Heart left ventricle (tissue), 16 donors: ENCODE measurements at regions of chr17 and their contacts with region 1.

Region 1: GRCh38 chr17:45759761-45760160 is 24.4 kb upstream of the CRHR1 start:
- DNase-seq: no peak
- ATAC-seq: no peak
- H3K4me3 ChIP-seq: no peak overlapping the region
- H3K27ac ChIP-seq: no peak overlapping the region
- H3K4me1 ChIP-seq: no peaks in the 10 kb centered on the region
- H3K27me3 ChIP-seq: peaks cover 0 to 51% (median 6%) of the 10 kb centered on the region in 9 donors
- CTCF ChIP-seq: no peak
- POLR2A ChIP-seq: no peak

Region 2: DNA sequence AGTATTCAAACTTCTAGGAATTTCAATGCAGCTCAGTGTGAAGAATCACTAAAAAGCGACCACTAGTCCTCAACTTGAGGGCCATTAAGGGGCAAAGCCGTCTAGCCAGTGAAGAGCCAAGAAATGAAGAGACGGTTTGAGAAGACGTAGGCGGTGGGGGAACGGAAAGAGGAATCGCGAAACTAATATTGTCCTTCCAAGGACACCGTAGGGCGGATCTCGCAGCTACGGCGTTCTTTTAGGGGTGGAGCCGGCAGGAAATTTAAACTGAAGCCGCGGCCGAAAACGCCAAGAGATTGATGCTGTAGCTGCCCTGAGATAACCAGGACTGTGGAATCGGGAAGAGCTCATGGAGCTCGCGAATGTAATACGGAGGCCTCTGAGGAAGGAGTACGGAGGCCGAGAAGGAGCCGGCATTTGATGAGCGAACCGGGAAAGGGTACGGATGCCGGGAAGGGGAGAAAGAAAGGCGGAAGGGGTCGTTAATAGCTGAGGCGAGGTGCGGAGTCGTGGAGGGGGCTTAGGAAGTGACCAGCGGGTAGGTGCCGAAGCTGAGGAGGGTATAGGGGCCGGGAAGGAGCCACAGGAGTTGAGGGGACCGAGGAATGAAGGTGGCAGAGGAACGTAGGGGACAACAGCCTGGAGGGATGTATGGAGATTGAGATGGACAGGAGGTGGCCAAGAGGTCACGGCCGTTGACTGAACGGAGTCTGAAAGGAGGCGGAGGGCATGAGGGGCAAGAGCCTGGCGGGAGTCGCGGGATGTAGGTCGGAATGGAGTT is 1051.2 kb before region 1 on chr17 and contains the start of gene DBF4B:
- intact Hi-C with region 1: no loop called
- DNase-seq: peak; percentile 78 to 90 (median 81)
- ATAC-seq: peak; percentile 63 to 92 (median 88)
- H3K4me3 ChIP-seq: peak within 1 kb of the TSS; percentile 49 to 90 (median 75)
- H3K27ac ChIP-seq: peak within 1 kb of the TSS; percentile 30 to 88 (median 82)
- H3K4me1 ChIP-seq: peaks cover 0 to 21% (median 9%) of the 10 kb centered on the region in 12 donors
- H3K27me3 ChIP-seq: peaks cover 0 to 4% (median 0%) of the 10 kb centered on the region in 9 donors
- CTCF ChIP-seq: no peak
- POLR2A ChIP-seq: peak in 1 of 2 donors; percentile 13
- total RNA-seq, gene DBF4B: 1.4 to 5.3 (median 4.2) TPM

Region 3: DNA sequence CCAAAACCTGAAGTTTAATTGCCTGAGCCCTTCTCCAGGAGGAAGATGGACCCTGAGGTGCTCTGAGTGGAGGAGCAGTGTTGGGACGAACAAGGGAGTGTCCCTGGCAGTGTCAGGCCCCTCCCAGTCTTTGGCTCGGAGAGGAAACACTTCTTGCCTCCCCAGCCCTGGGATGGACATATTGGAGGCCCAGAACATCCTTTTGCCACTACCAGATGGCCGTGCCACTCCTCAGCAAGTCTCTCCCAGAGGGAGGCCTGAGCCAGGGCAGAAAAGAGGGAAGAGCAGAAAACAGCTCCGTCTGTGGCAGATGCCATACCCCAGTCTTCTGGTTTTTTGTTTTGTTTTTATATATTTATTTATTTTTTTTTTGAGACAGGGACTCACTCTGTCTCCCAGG is 67.1 kb before region 1 on chr17:
- intact Hi-C with region 1: loop called in 1 of 10 experiments (anchors 10 kb)
- DNase-seq: no peak
- ATAC-seq: no peak
- H3K4me3 ChIP-seq: no peak overlapping the region
- H3K27ac ChIP-seq: no peak overlapping the region
- H3K4me1 ChIP-seq: no peaks in the 10 kb centered on the region
- H3K27me3 ChIP-seq: peaks cover 0 to 62% (median 29%) of the 10 kb centered on the region in 9 donors
- CTCF ChIP-seq: no peak
- POLR2A ChIP-seq: no peak

Region 4: DNA sequence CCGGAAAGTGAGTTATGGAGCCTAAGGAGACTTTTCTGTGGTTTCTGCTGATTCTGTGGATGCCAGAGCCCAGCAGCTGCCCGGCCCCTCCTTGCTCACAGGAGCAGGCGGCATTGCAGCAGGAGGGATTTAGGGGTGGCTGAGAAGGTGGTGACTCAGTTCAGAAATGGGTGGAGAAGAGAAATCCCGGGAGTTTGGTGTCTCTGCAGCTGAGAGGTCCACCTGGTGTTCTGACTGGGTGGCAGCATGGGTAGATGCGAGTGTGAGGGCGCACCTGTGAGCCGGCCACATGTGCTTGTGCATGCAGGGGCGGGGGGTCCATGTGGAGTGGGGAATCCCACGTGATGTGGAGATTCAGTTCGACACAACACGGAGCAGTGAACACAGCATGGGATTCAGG is 68.9 kb after region 1 on chr17:
- intact Hi-C with region 1: no loop called
- DNase-seq: no peak
- ATAC-seq: no peak
- H3K4me3 ChIP-seq: no peak overlapping the region
- H3K27ac ChIP-seq: no peak overlapping the region
- H3K4me1 ChIP-seq: no peaks in the 10 kb centered on the region
- H3K27me3 ChIP-seq: peaks cover 0 to 29% (median 0%) of the 10 kb centered on the region in 9 donors
- CTCF ChIP-seq: no peak
- POLR2A ChIP-seq: no peak

Region 5: GRCh38 chr17:46061435-46061834 is 301.7 kb after region 1 on chr17:
- intact Hi-C with region 1: no loop called
- DNase-seq: no peak
- ATAC-seq: no peak
- H3K4me3 ChIP-seq: no peak overlapping the region
- H3K27ac ChIP-seq: no peak overlapping the region
- H3K4me1 ChIP-seq: peaks cover 0 to 19% (median 9%) of the 10 kb centered on the region in 12 donors
- H3K27me3 ChIP-seq: no peaks in the 10 kb centered on the region
- CTCF ChIP-seq: peak in 8 of 12 donors; percentile 19 to 52 (median 39)
- POLR2A ChIP-seq: no peak